Naive thymus-derived CD4-positive, alpha-beta T cell (primary cell): ENCODE measurements at regions of chr11 and their contacts with region 1.

Region 1: DNA sequence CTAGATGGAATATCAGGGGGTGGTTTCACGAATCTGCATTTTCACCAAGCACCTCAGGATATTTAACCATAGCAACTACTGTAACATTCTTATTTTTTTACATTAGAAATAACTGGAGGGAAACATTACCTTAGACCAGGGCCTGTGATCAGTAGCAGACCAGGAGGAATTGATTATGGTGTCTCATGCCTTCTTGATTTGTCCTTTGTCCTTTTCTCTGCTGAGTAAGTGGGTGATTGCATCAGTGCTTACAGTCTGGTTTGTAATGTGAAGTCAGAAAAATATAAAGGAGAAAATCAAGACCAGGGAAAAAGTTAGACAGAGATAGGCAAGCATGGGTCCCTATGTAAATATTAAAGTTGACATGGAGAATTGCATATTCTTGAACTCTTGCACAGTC is 703.3 kb downstream of the NELL1 start:
- DNase-seq: no peak
- ATAC-seq: no peak
- H3K4me3 ChIP-seq: no peak overlapping the region
- H3K4me3 Mint-ChIP-seq: no peak overlapping the region
- H3K27ac ChIP-seq: no peak overlapping the region
- H3K27ac Mint-ChIP-seq: no peak overlapping the region
- H3K4me1 ChIP-seq: no peaks in the 10 kb centered on the region
- H3K4me1 Mint-ChIP-seq: no peaks in the 10 kb centered on the region
- H3K27me3 ChIP-seq: no peaks in the 10 kb centered on the region
- H3K27me3 Mint-ChIP-seq: no peaks in the 10 kb centered on the region

Region 2: DNA sequence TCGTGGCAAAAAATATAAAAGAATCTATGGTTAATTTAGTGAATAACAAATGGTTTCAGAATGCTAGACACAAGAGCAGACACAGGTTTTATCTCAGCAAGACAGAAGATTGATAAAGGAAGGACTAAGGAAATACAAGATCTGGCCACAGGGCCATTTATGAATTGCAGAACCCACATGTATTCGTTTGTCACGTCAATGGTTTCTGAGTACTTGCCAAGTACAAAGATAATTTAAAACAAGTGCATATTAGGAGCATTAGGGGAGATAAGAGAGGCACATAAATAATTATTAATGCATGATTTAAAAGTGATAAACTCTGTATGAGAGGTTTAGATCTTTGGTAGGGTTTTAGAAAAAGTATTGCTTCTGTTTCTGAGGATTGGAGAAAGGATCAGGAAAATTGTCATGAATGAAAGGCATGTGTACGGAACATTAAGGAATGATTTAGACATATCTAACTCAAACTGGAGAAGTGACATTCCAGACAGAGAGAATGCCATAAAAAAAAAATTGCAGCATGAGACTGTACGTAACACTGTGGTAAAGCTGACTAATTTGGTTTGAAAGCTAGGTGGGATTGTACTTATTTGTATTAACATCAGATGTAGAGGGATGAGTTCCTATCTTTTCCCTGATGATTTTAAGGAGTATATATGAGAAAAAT is 23.8 kb after region 1 on chr11:
- CTCF ChIA-PET with region 1: no interaction called
- POLR2A ChIA-PET with region 1: no interaction called
- intact Hi-C with region 1: loop called in 1 of 2 experiments (anchors 2 kb)
- DNase-seq: no peak
- ATAC-seq: no peak
- H3K4me3 ChIP-seq: no peak overlapping the region
- H3K4me3 Mint-ChIP-seq: no peak overlapping the region
- H3K27ac ChIP-seq: no peak overlapping the region
- H3K27ac Mint-ChIP-seq: no peak overlapping the region
- H3K4me1 ChIP-seq: no peaks in the 10 kb centered on the region
- H3K4me1 Mint-ChIP-seq: no peaks in the 10 kb centered on the region
- H3K27me3 ChIP-seq: no peaks in the 10 kb centered on the region
- H3K27me3 Mint-ChIP-seq: no peaks in the 10 kb centered on the region